ENCODE measurements at regions of chr22 and their contacts with region 1.

Region 1: DNA sequence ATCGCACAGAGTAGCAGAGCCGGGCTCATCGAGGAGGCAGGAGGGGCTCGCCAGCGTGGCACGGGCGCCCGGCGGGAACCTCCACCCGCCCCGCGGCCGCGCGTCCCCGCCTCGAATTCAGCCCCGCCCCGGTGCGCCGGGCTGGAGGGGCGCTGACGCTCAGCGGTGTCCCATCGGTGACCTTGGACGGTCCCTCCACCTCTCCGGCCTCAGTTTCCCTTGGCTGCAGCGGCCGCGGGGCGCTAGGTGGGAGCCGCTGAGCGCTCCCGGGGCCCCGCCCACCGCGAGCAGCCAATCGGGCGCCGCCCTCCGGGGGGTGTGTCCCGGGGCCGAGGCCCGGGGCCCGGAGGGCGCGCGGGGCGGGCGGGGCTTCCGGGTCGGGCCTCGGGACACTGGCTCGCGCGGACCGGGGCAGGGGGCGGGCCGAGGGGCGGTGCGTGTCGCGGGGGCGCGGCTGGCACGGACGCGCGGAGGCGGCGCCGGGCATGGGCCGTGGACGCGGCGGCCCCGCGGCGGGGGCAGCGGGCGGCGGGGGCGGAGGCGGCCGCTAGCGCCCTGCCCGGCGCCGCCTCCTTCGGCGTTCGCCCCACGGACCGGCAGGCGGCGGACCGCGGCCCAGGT is at the start of gene PPARA:
- DNase-seq: peak; percentile 93 to 96 (median 95)
- ATAC-seq: peak; percentile 52 to 89 (median 84)
- H3K4me3 ChIP-seq: peak within 1 kb of the TSS; percentile 52 to 99 (median 93)
- H3K27ac ChIP-seq: peak within 1 kb of the TSS; percentile 86 to 100 (median 94)
- H3K4me1 ChIP-seq: peaks cover 3 to 62% (median 35%) of the 10 kb centered on the region in 12 donors
- H3K27me3 ChIP-seq: no peaks in the 10 kb centered on the region
- CTCF ChIP-seq: no peak
- POLR2A ChIP-seq: peak; percentile 19 to 59
- total RNA-seq, gene PPARA: 51.0 to 96.4 (median 83.6) TPM

Region 2: DNA sequence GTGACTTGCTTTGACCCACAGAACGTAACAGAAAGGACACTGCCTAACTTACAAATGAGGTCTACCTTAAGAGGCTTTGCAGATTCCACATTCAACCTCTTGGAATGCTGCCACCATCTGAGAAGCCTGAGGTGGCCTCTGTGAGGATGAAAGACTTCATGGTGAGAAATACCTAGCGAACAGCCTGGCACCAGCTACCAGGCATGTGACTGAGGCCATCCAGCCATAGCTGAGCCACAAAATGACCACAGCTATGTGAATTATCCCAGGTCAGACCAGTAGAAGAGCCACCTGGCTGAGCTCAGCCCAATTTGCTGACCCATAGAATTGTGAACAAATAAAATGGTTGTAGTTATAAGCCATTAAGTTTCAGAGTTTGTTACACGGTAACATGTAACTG is 37.7 kb after region 1 on chr22:
- intact Hi-C with region 1: loop called in 3 of 10 experiments (anchors 5 kb)
- DNase-seq: no peak
- ATAC-seq: no peak
- H3K4me3 ChIP-seq: no peak overlapping the region
- H3K27ac ChIP-seq: no peak overlapping the region
- H3K4me1 ChIP-seq: peaks cover 0 to 18% (median 1%) of the 10 kb centered on the region in 12 donors
- H3K27me3 ChIP-seq: no peaks in the 10 kb centered on the region
- CTCF ChIP-seq: no peak
- POLR2A ChIP-seq: no peak

Region 3: GRCh38 chr22:46196278-46196677 is 46.1 kb after region 1 on chr22:
- intact Hi-C with region 1: loop called in 3 of 10 experiments (anchors 2 to 5 kb)
- DNase-seq: peak; percentile 59 to 83 (median 75)
- ATAC-seq: peak; percentile 92 to 96 (median 94)
- H3K4me3 ChIP-seq: no peak overlapping the region
- H3K27ac ChIP-seq: peak overlapping the region; percentile 47 to 89 (median 70)
- H3K4me1 ChIP-seq: peaks cover 0 to 51% (median 12%) of the 10 kb centered on the region in 12 donors
- H3K27me3 ChIP-seq: no peaks in the 10 kb centered on the region
- CTCF ChIP-seq: no peak
- POLR2A ChIP-seq: no peak

Region 4: GRCh38 chr22:46239261-46240048 is 89.3 kb after region 1 on chr22:
- intact Hi-C with region 1: loop called in 3 of 10 experiments (anchors 5 to 10 kb)
- DNase-seq: no peak
- ATAC-seq: no peak
- H3K4me3 ChIP-seq: no peak overlapping the region
- H3K27ac ChIP-seq: peak overlapping the region in 10 of 12 donors; percentile 2 to 91 (median 74)
- H3K4me1 ChIP-seq: peaks cover 0 to 58% (median 28%) of the 10 kb centered on the region in 12 donors
- H3K27me3 ChIP-seq: no peaks in the 10 kb centered on the region
- CTCF ChIP-seq: no peak
- POLR2A ChIP-seq: no peak

Region 5: GRCh38 chr22:46250035-46250782 is 100.1 kb after region 1 on chr22 and contains the start of gene CDPF1:
- intact Hi-C with region 1: loop called in 7 of 10 experiments (anchors 5 to 10 kb)
- DNase-seq: peak; percentile 94 to 97 (median 95)
- ATAC-seq: peak; percentile 74 to 94 (median 92)
- H3K4me3 ChIP-seq: peak within 1 kb of the TSS; percentile 53 to 97 (median 81)
- H3K27ac ChIP-seq: peak within 1 kb of the TSS; percentile 69 to 96 (median 94)
- H3K4me1 ChIP-seq: peaks cover 7 to 58% (median 31%) of the 10 kb centered on the region in 12 donors
- H3K27me3 ChIP-seq: no peaks in the 10 kb centered on the region
- CTCF ChIP-seq: peak in 2 of 12 donors; percentile 12 to 31
- POLR2A ChIP-seq: peak; percentile 74 to 96
- total RNA-seq, gene CDPF1: 7.4 to 13.6 (median 9.3) TPM

Region 6: DNA sequence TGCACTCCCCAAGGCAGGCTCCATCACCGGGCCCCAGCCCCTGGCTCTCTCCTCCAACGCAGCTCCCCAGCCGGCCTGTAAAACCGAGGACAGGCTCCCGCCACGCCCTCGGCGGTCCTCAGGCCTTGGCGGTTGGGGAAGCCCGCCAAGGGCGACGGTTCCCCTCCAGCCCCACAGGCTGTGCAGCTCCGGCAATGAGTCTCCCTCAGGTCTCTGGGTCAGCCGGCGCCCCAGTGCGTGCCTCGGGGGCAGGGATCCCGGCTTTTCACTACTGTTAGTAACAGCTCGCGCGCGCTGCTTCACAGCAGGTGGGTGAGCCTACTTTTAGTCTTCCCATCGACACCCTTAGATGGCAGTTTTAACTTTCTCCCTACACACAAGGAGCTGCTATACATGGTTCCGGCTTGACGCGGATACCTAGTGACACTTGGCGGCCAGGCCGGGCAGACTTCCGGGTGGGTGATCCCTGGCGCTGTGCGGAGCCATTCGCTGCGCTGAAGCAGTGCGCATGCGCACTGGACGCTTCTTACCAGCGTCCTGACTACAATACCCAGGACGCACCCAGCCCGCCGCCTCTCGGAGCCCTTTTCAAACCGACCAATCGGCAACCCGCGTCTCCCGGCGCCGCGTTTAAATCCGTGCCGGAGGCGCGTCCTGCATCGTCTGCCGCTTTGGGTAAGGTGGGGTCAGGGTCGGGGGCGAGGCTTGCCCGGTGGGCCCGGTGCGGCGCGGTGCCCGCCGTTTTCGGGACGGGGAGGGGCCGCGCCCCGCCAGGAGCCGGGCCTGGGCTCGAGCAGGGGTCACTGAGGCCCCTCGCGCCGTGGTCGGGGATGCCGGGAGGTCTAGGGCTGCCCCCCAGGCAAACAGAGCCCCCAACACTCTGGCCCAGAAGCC is 146.4 kb after region 1 on chr22 and contains the start of gene GTSE1:
- intact Hi-C with region 1: loop called in 2 of 10 experiments (anchors 5 kb)
- DNase-seq: peak; percentile 97 to 100 (median 99)
- ATAC-seq: peak; percentile 97 to 99 (median 98)
- H3K4me3 ChIP-seq: peak within 1 kb of the TSS; percentile 21 to 74 (median 63)
- H3K27ac ChIP-seq: peak within 1 kb of the TSS; percentile 85 to 99 (median 88)
- H3K4me1 ChIP-seq: peaks cover 0 to 37% (median 15%) of the 10 kb centered on the region in 12 donors
- H3K27me3 ChIP-seq: no peaks in the 10 kb centered on the region
- CTCF ChIP-seq: peak in 10 of 12 donors; percentile 4 to 61 (median 30)
- POLR2A ChIP-seq: peak in 1 of 2 donors; percentile 62
- total RNA-seq, gene GTSE1: 0.21 to 6.9 (median 0.64) TPM in 8 of 9 donors, not detected in the other

Region 7: DNA sequence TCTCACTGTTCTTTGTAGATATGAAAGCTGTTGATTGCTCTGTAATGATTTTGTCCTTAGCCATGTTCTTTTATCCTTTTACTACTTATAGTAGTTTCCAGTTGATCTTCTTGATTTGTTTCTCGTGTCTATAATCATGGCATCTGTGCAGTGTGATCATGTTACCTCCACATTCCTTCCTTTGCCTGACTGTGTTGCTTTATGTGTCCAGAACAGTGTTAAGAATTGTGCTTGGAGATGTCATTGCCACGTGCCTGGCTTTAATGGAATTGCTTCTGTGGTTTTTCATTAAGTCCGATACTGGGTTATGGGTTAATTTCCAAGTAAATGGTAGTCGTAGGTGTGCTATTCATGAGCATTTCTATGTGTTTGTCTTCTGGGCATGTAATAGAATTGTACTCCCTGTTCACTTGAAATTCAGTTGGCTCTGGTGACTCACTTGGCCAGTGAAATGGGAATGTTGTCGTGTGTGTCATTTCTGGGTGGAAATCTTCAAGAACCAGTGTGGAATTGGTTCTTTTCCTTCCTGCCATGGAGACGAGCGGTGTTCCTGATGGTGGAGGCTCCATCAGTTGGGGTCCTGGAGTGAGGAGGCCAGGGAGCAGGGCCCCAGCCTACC is 153.3 kb after region 1 on chr22:
- intact Hi-C with region 1: loop called in 2 of 10 experiments (anchors 5 kb)
- DNase-seq: peak in 1 of 5 donors; percentile 26
- ATAC-seq: no peak
- H3K4me3 ChIP-seq: no peak overlapping the region
- H3K27ac ChIP-seq: no peak overlapping the region
- H3K4me1 ChIP-seq: no peaks in the 10 kb centered on the region
- H3K27me3 ChIP-seq: no peaks in the 10 kb centered on the region
- CTCF ChIP-seq: no peak
- POLR2A ChIP-seq: no peak

Measured in heart left ventricle (tissue), 16 donors.